ENCODE measurements at regions of chr13 and their contacts with region 1.

Region 1: DNA sequence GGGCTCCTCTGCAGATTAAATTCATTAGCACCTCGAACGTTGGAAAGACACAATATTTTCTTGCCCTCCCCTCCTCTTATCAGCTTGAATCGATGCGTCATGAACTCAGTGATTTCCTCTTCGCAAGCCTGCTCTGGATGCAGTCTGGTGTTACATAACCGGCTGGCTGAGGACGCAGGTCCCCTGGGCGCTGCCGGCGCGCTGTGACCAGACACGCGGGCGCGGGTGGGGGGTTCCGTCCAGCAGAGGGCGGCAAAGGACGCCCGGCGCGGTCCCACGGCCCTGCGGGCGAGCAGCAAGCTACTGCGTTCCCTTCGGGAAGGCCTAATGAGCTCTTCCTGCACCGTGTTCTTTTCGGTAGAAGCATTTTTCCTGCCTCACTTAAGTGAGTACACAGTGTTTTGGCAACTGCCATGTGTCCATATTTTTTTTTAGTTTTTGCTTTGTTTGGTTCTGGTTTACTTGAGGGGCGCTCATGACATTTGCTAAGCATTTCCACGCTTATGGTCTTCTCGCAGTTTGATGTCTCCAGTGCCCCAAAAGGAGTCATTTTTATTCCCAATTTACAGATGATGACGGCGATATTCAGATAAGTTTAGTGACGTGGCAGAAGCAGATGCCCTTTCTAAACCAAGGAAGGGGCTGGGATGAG is 112.2 kb upstream of the MBNL2 start:
- H3K4me3 Mint-ChIP-seq: no peak overlapping the region
- H3K27ac Mint-ChIP-seq: peak overlapping the region; percentile 40
- H3K4me1 Mint-ChIP-seq: peaks cover 13% of the 10 kb centered on the region
- H3K27me3 Mint-ChIP-seq: peaks cover 35% of the 10 kb centered on the region

Region 2: GRCh38 chr13:97344265-97345175 is 234.6 kb after region 1 on chr13:
- intact Hi-C with region 1: loop called (anchors 1 kb)
- H3K4me3 Mint-ChIP-seq: no peak overlapping the region
- H3K27ac Mint-ChIP-seq: no peak overlapping the region
- H3K4me1 Mint-ChIP-seq: no peaks in the 10 kb centered on the region
- H3K27me3 Mint-ChIP-seq: no peaks in the 10 kb centered on the region

Region 3: GRCh38 chr13:97359181-97360057 is 249.5 kb after region 1 on chr13:
- intact Hi-C with region 1: loop called (anchors 1 kb)
- H3K4me3 Mint-ChIP-seq: no peak overlapping the region
- H3K27ac Mint-ChIP-seq: no peak overlapping the region
- H3K4me1 Mint-ChIP-seq: peaks cover 18% of the 10 kb centered on the region
- H3K27me3 Mint-ChIP-seq: no peaks in the 10 kb centered on the region

Region 4: DNA sequence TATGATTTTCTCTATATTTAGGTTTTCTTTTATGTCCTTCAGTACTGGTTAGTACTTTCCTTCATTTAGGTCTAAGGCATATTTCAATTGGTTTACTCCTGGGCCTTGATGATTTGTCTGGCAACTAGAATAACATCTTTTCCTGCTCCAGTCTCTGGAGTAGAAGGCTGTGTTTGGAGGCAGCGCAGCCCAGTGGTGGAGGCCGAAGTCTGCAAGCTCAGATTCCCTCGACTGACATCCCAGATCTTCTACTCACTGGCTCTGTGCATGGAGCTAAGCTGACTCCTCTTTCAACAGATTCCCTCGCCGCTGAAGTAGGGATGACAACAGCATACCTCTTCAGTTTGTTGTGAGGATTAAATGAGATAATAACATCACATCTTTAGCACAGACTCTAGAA is 465.0 kb after region 1 on chr13:
- intact Hi-C with region 1: loop called (anchors 5 kb)
- H3K4me3 Mint-ChIP-seq: no peak overlapping the region
- H3K27ac Mint-ChIP-seq: no peak overlapping the region
- H3K4me1 Mint-ChIP-seq: no peaks in the 10 kb centered on the region
- H3K27me3 Mint-ChIP-seq: peaks cover 2% of the 10 kb centered on the region

Region 5: GRCh38 chr13:97798836-97799235 is 688.9 kb after region 1 on chr13:
- intact Hi-C with region 1: loop called (anchors 2 kb)
- H3K4me3 Mint-ChIP-seq: no peak overlapping the region
- H3K27ac Mint-ChIP-seq: no peak overlapping the region
- H3K4me1 Mint-ChIP-seq: no peaks in the 10 kb centered on the region
- H3K27me3 Mint-ChIP-seq: no peaks in the 10 kb centered on the region

Measured in dendritic cell treated with granulocyte-macrophage colony-stimulating factor and Interleukin-4, amounts not matched to agents 40 ng/mL and 50 ng/mL, for 4 days (primary cell).